Mammary epithelial cell (primary cell): ENCODE measurements at regions of chr4 and their contacts with region 1.

Region 1: GRCh38 chr4:102430461-102430910 is 70.7 kb upstream of the NFKB1 start:
- DNase-seq: peak; percentile 36
- H3K4me3 ChIP-seq: peak overlapping the region; percentile 44 to 99 (median 75)
- H3K27ac ChIP-seq: peak overlapping the region; percentile 98
- H3K4me1 ChIP-seq: peaks cover 12% of the 10 kb centered on the region
- H3K27me3 ChIP-seq: no peaks in the 10 kb centered on the region
- CTCF ChIP-seq: no peak

Region 2: GRCh38 chr4:102344954-102345794 is 85.3 kb before region 1 on chr4 and contains the start of gene SLC39A8:
- CTCF ChIA-PET with region 1: interaction called, 4 read pairs
- dilution Hi-C with region 1: no loop called
- in situ Hi-C with region 1: loop called in 1 of 2 experiments (anchors 10 kb)
- intact Hi-C with region 1: loop called (anchors 1 kb)
- DNase-seq: peak; percentile 80
- H3K4me3 ChIP-seq: peak within 1 kb of the TSS; percentile 76 to 91 (median 76)
- H3K27ac ChIP-seq: peak within 1 kb of the TSS; percentile 76
- H3K4me1 ChIP-seq: peaks cover 26% of the 10 kb centered on the region
- H3K27me3 ChIP-seq: no peaks in the 10 kb centered on the region
- CTCF ChIP-seq: peak; percentile 40 to 86
- total RNA-seq, gene SLC39A8: 8.9 to 12.5 TPM

Region 3: GRCh38 chr4:102411416-102411815 is 19.1 kb before region 1 on chr4:
- CTCF ChIA-PET with region 1: interaction called, 27 read pairs
- dilution Hi-C with region 1: no loop called
- in situ Hi-C with region 1: no loop called
- intact Hi-C with region 1: no loop called
- DNase-seq: peak; percentile 28
- H3K4me3 ChIP-seq: no peak overlapping the region
- H3K27ac ChIP-seq: no peak overlapping the region
- H3K4me1 ChIP-seq: peaks cover 3% of the 10 kb centered on the region
- H3K27me3 ChIP-seq: no peaks in the 10 kb centered on the region
- CTCF ChIP-seq: no peak

Region 4: DNA sequence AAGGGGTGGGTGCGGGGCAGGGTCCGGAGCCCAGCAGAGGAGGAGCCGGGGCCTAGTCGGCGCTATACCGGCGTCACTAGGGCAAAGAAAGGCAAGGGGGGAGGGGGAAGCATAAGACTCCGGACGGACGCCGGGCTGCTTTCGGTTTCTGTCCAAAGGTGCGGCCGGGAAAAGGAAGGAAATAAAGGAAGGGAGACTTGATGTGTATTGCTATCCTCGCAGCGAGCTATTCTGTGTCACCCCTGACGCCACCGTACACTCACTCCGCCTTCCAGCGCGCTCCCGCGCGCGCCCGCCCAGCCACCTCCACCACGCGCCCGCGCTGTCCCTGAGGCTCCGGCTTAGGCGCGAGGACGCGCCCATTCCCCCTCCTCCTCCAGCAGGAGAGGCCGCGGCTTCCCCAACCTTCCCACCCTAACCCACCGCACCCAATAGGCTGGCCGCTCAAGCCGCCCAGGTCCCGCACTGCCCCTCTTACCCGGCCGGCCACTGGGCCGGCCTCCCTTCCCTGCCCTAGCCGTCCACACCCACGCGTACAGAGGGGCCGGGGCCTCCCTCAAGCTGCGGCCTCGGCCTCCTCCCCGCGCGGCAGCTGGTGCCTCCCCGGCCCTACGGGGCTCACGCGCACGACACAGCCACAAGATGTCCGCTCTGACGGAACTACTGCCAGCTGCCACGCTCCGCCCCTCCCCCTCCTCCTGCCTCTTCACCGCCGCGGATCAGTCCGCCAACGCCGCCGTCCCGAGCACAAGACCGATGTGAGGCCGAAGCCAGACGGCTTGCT is 396.6 kb after region 1 on chr4 and contains the start of gene UBE2D3:
- CTCF ChIA-PET with region 1: interaction called, 19 read pairs
- dilution Hi-C with region 1: no loop called
- in situ Hi-C with region 1: no loop called
- intact Hi-C with region 1: no loop called
- DNase-seq: peak; percentile 94
- H3K4me3 ChIP-seq: peak within 1 kb of the TSS; percentile 92 to 93 (median 93)
- H3K27ac ChIP-seq: peak within 1 kb of the TSS; percentile 99
- H3K4me1 ChIP-seq: peaks cover 15% of the 10 kb centered on the region
- H3K27me3 ChIP-seq: no peaks in the 10 kb centered on the region
- CTCF ChIP-seq: peak in 1 of 2 donors; percentile 20
- total RNA-seq, gene UBE2D3: 338 to 352 TPM

Region 5: GRCh38 chr4:103024996-103025395 is 594.5 kb after region 1 on chr4:
- CTCF ChIA-PET with region 1: interaction called, 15 read pairs
- dilution Hi-C with region 1: no loop called
- in situ Hi-C with region 1: no loop called
- intact Hi-C with region 1: no loop called
- DNase-seq: no peak
- H3K4me3 ChIP-seq: no peak overlapping the region
- H3K27ac ChIP-seq: no peak overlapping the region
- H3K4me1 ChIP-seq: peaks cover 2% of the 10 kb centered on the region
- H3K27me3 ChIP-seq: no peaks in the 10 kb centered on the region
- CTCF ChIP-seq: no peak